Activated CD4-positive, alpha-beta T cell treated with anti-CD3 and anti-CD28 coated beads for 36 hours (primary cell): ENCODE measurements at regions of chr7 and their contacts with region 1.

Region 1: DNA sequence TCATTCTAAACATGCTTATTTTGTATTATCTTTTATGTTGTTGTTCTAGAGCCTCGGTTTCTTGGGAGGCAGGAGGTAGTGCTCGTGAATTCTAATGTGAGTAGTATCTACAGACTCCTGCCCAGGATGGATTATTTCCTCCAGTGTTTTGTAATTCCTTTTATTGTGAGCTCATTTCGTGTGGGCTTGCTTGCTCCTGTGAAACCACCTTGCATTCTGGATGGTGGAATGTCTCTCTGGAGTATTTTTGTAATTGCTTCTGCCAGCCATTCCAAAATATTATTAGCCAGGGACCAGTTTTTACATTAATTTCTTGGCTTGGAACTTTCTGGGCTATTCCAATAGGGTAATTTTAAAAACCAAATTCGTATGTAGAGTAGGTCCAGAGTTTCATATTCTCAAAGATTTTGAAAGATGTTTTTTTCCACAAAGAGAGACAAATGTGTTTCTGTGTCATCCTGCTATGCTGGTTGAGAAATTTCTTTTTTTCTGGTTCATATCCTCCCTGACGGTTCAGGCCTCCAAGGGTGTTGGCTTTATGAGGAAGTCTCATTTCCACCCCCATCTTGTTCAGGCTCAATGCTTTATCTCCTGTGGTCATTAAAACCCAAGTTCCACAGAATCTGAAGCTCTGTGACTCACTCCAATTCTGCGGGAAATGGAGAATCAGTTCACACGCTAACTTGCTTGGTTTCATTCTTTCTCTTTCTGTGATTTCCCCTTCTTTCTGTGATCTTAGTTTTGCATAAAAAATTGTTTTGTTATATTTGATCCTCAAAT is 41.7 kb upstream of the CALD1 start:
- DNase-seq: peak; percentile 60
- ATAC-seq: peak; percentile 94
- H3K4me3 Mint-ChIP-seq: peak overlapping the region; percentile 26
- H3K27ac Mint-ChIP-seq: peak overlapping the region; percentile 84
- H3K4me1 Mint-ChIP-seq: peaks cover 39% of the 10 kb centered on the region
- H3K27me3 Mint-ChIP-seq: no peaks in the 10 kb centered on the region

Region 2: DNA sequence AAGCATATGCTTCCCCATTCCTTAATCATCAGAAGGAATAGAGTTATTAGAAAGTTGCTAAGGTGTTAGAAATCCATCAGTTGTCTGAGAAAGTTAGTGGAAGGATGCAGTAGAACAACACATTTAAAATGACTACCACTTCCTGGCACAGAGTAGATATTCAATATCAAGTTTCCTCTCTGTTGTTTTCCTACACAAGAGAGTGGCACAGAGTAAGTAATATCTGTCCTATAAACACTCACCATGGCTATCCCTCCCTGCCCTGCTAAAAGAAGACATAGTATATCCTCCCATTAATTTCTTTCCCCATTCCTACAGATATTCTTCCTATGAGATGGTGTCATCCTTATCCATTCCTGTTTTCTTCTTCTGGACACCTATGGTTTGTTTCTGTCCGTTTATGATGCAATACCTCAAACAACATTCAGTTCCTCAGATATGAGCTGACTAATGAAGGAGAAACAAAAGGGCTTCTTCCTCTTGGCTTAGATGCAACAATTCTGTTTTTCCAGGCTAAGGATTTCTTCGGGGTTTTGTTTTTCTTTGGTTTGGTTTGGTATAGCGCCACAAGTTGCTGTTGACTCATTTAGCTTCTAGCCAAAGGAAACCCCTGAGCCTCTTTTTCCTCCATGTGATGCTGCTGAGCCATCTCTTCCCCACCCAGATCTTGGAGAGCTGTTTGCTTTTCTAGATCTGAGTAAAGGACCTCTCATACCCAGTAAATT is 124.0 kb before region 1 on chr7:
- CTCF ChIA-PET with region 1: no interaction called
- POLR2A ChIA-PET with region 1: no interaction called
- intact Hi-C with region 1: loop called in 1 of 2 experiments (anchors 1 kb)
- DNase-seq: peak; percentile 62
- ATAC-seq: peak; percentile 87
- H3K4me3 Mint-ChIP-seq: no peak overlapping the region
- H3K27ac Mint-ChIP-seq: peak overlapping the region; percentile 63
- H3K4me1 Mint-ChIP-seq: peaks cover 12% of the 10 kb centered on the region
- H3K27me3 Mint-ChIP-seq: peaks cover 29% of the 10 kb centered on the region

Region 3: DNA sequence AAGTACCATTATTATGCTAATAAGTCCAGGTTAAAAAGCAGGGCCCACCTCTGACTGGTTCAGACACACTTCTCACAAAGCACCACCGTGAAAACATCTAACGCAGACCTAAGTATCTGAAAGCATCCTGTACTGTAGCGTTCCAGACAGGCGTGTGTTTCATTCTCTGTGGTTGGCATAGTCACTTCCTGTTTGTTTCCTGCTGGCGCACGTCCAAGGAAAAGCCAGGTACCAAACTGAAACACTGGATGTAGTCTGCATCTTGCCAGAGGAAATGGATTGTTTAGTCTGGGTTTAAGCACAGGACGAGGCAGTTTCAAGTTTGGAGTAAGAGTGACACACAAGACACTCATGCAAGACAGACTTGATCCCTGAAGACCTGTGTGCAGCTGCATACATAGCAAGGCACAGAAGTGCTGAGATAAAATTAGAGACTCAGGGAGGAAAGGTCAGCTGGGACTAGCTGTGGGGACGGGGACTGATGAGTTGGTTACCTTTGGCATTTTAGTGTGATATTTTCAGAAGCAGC is 67.8 kb before region 1 on chr7:
- CTCF ChIA-PET with region 1: no interaction called
- POLR2A ChIA-PET with region 1: no interaction called
- intact Hi-C with region 1: loop called in 1 of 2 experiments (anchors 2 kb)
- DNase-seq: peak; percentile 83
- ATAC-seq: peak; percentile 75
- H3K4me3 Mint-ChIP-seq: peak overlapping the region; percentile 50
- H3K27ac Mint-ChIP-seq: peak overlapping the region; percentile 89
- H3K4me1 Mint-ChIP-seq: peaks cover 51% of the 10 kb centered on the region
- H3K27me3 Mint-ChIP-seq: no peaks in the 10 kb centered on the region

Region 4: GRCh38 chr7:134920026-134920753 is 182.4 kb after region 1 on chr7:
- CTCF ChIA-PET with region 1: no interaction called
- POLR2A ChIA-PET with region 1: no interaction called
- intact Hi-C with region 1: loop called in 1 of 2 experiments (anchors 1 kb)
- DNase-seq: no peak
- ATAC-seq: peak; percentile 85
- H3K4me3 Mint-ChIP-seq: no peak overlapping the region
- H3K27ac Mint-ChIP-seq: no peak overlapping the region
- H3K4me1 Mint-ChIP-seq: peaks cover 19% of the 10 kb centered on the region
- H3K27me3 Mint-ChIP-seq: no peaks in the 10 kb centered on the region